OCI-LY7 (cell line): ENCODE measurements at regions of chr10 and their contacts with region 1.

Region 1: DNA sequence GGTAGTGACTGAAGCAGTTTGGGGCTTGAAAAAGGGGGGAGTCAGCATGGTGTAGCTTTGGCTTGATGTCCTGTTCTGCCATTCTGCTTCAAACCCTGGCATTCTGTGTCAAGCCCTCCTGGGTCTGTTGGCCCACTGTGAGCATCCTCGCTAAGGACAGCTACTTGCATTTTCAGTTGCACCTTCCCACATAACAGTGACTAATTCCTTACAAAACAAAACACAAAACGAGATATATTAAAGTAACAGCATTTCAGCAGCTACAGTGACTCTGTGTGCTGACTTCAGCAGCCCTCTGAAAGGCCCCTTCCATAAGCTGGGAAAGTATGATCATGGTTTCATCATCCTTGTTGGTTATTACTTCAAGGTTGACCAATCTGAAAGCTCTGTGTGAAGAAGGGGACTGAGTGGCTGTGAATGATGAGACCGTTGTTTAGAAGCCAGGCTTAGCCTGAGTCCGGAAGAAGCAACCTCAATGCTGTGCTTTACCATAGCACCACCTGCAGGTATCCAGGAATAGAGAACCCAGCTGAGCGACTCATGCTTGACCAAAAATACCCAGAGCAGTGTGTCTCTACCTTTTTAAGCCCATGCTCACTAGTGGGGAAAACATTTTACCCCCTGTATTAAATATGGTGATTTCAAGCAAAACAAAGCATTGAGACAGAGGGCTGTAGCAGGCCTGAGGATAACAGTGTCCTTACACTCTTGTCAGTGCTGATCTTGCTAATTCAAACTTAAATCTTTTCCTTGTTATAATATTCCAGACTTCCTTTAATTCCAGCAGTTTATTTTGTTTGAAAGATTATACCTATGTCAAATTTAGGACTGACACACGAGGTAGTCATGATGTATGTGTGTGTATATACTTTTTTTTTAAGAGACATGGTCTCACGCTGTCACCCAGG is 42.6 kb upstream of the CC2D2B start:
- DNase-seq: peak; percentile 87
- H3K4me3 ChIP-seq: no peak overlapping the region
- H3K27ac ChIP-seq: peak overlapping the region; percentile 20
- H3K4me1 ChIP-seq: peaks cover 16% of the 10 kb centered on the region
- CTCF ChIP-seq: peak; percentile 90

Region 2: DNA sequence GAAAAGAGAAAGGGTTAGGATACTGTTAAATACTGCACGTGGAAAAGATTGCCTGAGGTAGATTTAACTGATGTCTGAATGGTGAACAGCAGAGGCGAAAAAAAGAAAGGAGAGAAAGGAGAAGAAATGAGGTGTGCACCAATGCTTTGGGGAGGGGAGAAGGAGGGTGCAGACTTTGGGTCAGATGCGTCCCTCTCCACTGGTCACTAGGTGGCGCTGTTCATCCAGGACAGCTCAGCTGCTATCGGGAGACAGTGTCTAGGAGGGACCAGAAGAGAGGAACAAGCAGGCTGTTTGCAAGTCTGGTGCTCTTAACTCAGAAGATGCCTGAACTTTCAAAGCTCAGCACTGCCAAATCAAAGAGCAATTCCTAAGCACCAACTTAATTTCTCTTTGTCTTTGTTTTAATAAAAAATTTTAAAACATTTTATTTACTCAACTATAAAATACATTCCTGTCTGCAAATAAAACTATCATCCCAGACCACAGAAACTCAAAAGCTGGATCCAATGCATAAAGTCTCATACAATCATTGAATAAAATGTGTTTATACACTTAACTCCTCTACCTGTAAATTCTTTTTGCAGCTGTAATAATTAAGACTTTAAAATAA is 490.5 kb before region 1 on chr10:
- CTCF ChIA-PET with region 1: no interaction called
- POLR2A ChIA-PET with region 1: no interaction called
- intact Hi-C with region 1: loop called (anchors 10 kb)
- DNase-seq: peak; percentile 83
- H3K4me3 ChIP-seq: no peak overlapping the region
- H3K27ac ChIP-seq: no peak overlapping the region
- H3K4me1 ChIP-seq: no peaks in the 10 kb centered on the region
- CTCF ChIP-seq: peak; percentile 95

Region 3: DNA sequence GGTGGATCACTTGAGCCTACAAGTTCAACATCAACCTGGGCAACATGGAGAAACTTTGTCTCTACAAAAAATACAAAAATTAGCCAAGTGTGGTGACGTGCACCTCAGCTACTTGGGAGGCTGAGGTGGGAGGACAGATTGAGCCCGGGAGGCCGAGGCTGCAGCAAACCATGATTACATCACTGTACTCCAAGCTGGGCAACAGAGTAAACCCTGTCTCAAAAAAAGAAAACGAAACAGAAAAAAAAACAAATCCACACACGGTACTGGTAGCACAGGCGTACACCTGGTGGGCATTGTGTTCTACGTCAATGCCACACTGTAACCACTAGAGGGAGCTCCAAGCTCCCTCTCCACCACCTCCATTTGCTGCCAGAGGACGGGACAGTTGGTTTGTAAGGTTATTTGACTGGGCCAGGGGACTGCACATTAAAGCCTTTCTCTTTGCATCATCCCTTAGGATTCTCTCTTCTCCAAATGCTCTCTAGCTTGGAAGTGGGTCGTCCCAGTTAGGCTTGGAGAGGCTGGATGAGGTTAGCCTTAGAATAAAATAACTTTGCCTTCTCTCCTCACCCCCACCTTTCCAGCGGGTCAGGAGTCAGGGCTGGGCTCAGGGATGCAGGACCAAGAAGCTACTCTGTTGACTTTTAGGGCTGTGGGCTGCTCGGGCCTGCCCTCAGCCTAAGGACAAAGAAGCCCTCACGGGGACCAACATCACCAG is 434.8 kb before region 1 on chr10:
- CTCF ChIA-PET with region 1: no interaction called
- POLR2A ChIA-PET with region 1: no interaction called
- intact Hi-C with region 1: loop called (anchors 5 kb)
- DNase-seq: peak; percentile 66
- H3K4me3 ChIP-seq: no peak overlapping the region
- H3K27ac ChIP-seq: no peak overlapping the region
- H3K4me1 ChIP-seq: no peaks in the 10 kb centered on the region
- CTCF ChIP-seq: peak; percentile 93

Region 4: GRCh38 chr10:95693668-95694534 is 171.3 kb before region 1 on chr10 and contains the start of gene TCTN3:
- CTCF ChIA-PET with region 1: interaction called, 35 read pairs
- POLR2A ChIA-PET with region 1: interaction called, 9 read pairs
- intact Hi-C with region 1: loop called (anchors 1 kb)
- DNase-seq: peak; percentile 100
- H3K4me3 ChIP-seq: peak within 1 kb of the TSS; percentile 83
- H3K27ac ChIP-seq: no peak within 1 kb of the TSS
- H3K4me1 ChIP-seq: peaks cover 22% of the 10 kb centered on the region
- CTCF ChIP-seq: peak; percentile 98
- total RNA-seq, gene TCTN3: 9.6 and 10.4 TPM in 2 replicates

Region 5: GRCh38 chr10:95841661-95842498 is 23.3 kb before region 1 on chr10:
- CTCF ChIA-PET with region 1: interaction called, 10 read pairs
- POLR2A ChIA-PET with region 1: interaction called, 17 read pairs
- intact Hi-C with region 1: no loop called
- DNase-seq: peak; percentile 83
- H3K4me3 ChIP-seq: peak overlapping the region; percentile 13
- H3K27ac ChIP-seq: peak overlapping the region; percentile 13
- H3K4me1 ChIP-seq: peaks cover 45% of the 10 kb centered on the region
- CTCF ChIP-seq: peak; percentile 100

Region 6: DNA sequence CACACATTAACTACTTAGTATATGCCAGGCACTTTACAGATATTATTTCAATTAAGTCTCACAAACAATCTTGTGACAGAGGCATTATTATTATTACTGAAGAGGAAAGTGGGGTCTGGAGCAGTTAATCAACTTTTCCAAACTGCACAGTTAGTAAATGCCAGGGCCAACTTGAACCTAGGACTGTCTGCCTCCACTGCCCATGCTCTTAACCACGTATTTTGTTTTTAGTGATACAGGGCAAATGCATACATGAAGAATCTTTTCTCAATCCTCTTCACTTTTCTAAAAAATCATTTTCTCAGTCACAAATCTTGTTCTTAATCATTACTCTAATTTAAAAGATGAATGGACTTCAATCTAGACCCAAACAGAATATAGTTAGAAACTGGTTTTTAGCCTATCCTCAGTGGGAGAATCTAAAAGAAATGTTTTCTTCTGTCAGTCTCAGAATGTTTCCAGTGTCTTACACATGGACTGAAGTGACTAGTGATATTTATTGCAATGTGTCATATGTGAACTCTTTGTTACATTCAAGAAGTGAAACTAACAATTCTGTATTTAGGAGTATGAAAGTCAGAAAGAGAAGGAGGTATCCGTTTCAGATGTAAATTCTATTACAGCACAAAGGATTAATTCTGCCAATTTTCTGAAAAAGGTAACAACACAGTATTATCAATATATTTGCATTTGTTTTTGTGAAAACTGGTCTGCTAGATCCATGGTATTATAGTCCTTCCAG is 122.7 kb after region 1 on chr10:
- CTCF ChIA-PET with region 1: interaction called, 4 read pairs
- POLR2A ChIA-PET with region 1: interaction called, 3 read pairs
- intact Hi-C with region 1: loop called (anchors 1 kb)
- DNase-seq: peak; percentile 55
- H3K4me3 ChIP-seq: peak overlapping the region; percentile 24
- H3K27ac ChIP-seq: peak overlapping the region; percentile 74
- H3K4me1 ChIP-seq: peaks cover 34% of the 10 kb centered on the region
- CTCF ChIP-seq: no peak

Region 7: GRCh38 chr10:96319754-96320474 is 454.8 kb after region 1 on chr10:
- CTCF ChIA-PET with region 1: no interaction called
- POLR2A ChIA-PET with region 1: no interaction called
- intact Hi-C with region 1: loop called (anchors 10 kb)
- DNase-seq: no peak
- H3K4me3 ChIP-seq: no peak overlapping the region
- H3K27ac ChIP-seq: no peak overlapping the region
- H3K4me1 ChIP-seq: peaks cover 10% of the 10 kb centered on the region
- CTCF ChIP-seq: no peak